PC-9 (cell line): ENCODE measurements at regions of chr6 and their contacts with region 1.

Region 1: DNA sequence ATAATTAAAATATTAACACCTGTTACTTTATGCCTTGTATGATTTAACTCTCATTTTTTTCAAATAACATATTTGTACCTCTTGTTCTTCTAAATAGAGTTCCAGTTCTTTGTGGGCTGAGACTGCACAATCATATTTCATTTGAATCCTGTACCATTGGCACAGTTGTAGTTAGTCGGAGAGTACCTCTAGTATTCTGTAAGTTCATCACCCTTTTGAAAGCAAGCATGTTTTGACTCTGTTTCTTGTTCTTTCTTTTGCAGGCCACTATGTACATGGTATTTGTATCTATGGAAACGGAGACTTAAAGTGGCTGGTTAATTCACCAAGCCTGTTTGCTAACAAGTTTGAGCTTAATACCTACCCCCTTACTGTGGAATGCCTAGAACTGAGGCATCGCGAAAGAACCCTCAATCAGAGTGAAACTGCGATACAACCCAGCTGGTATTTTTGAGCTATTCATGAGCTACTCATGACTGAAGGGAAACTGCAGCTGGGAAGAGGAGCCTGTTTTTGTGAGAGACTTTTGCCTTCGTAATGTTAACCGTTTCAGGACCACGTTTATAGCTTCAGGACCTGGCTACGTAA is 68.2 kb downstream of the C6orf52 start:
- DNase-seq: no peak
- H3K4me3 ChIP-seq: no peak overlapping the region
- H3K27ac ChIP-seq: no peak overlapping the region
- H3K4me1 ChIP-seq: no peaks in the 10 kb centered on the region
- H3K27me3 ChIP-seq: no peaks in the 10 kb centered on the region
- CTCF ChIP-seq: no peak

Region 2: DNA sequence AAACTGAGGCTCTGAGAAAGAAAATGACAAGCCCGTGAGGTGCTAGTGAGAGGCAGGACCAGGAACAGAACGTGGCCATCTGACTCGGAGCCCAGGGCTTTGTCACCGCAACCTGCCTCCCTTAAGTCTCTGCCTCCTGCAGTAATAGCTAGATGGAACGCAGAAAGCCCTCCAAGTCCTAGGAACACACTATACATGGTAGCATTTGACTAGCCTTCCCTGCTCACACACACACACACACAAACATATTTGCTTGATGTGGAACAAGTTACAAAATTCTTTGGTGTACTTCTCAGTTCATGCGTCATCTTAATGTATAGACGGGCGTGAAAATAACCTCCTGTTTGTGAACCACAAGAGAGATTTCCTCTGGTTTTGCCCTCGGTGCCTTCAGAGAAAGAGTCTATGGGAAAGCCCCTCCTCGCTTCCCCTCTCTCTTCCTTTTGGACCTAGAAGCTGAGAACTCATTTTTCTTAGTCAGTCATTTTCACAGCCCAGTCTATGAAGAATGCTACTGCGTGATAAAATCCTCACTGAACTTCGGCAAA is 29.3 kb after region 1 on chr6:
- CTCF ChIA-PET with region 1: no interaction called
- POLR2A ChIA-PET with region 1: interaction called, 11 read pairs
- intact Hi-C with region 1: no loop called
- DNase-seq: no peak
- H3K4me3 ChIP-seq: no peak overlapping the region
- H3K27ac ChIP-seq: no peak overlapping the region
- H3K4me1 ChIP-seq: no peaks in the 10 kb centered on the region
- H3K27me3 ChIP-seq: no peaks in the 10 kb centered on the region
- CTCF ChIP-seq: no peak

Region 3: DNA sequence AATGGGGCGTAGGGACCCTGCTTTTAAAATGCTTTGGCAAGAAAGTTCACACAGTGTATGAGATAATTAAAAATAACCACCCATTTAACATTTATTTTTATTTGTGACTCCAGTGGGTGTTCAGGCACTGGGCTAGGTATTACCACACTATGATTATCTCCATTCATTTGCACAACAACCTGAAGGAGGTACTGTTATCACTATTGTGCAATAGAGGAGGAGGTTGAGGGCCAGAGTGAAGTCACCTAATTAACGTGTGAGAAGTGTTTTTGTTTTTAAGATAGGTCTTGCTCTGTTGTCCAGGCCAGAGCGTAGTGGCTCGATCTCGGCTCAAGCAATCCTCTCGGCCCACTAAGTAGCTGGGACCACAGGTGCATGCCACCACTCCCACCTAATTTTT is 182.8 kb after region 1 on chr6:
- CTCF ChIA-PET with region 1: no interaction called
- POLR2A ChIA-PET with region 1: no interaction called
- intact Hi-C with region 1: no loop called
- DNase-seq: no peak
- H3K4me3 ChIP-seq: no peak overlapping the region
- H3K27ac ChIP-seq: no peak overlapping the region
- H3K4me1 ChIP-seq: no peaks in the 10 kb centered on the region
- H3K27me3 ChIP-seq: no peaks in the 10 kb centered on the region
- CTCF ChIP-seq: no peak